GM12878 (cell line): ENCODE measurements at regions of chr16 and their contacts with region 1.

Region 1: DNA sequence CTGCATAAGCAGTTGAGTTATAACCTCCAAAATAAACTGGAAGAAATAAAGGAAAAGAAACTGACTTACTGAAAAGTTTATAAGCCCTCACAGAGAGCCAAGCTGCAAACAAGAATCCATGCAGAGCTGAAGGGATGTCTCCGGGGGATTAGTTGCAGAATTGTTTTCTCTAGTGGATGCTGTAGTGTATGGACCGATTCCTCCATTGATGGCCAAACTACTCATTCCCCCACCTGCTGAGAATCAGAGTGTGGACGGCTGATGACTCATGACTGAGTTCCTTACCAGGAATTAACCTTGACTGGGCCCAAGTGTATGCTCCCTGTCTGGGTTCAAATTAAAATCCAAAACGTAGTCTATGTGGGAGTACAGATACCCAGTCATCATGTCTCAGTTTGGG is 93.9 kb upstream of the CDH8 start:
- DNase-seq: no peak
- ATAC-seq: no peak
- H3K4me3 ChIP-seq: no peak overlapping the region
- H3K27ac ChIP-seq: no peak overlapping the region
- H3K4me1 ChIP-seq: no peaks in the 10 kb centered on the region
- H3K27me3 ChIP-seq: no peaks in the 10 kb centered on the region
- CTCF ChIP-seq: no peak
- EP300 ChIP-seq: no peak
- POLR2A ChIP-seq: no peak
- RAD21 ChIP-seq: no peak

Region 2: DNA sequence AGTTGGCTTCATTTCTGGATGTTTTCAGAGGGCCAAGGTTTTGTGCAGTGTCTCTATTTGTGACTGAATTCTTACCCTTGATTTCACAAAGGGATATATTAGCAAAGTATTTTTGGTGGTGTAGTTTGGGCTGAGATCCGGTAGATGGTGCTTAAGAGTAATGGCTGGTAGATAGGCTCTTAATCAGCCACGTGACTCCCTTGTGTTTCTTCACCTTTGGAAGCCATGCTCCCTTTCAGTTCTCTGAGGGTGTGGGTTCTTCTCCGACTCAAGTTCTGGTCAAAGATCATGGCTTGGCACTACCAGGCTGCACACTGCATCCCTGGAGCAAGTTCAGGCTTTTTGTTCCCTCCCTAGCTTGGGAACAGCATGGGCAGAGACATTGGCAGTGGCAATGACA is 981.2 kb before region 1 on chr16:
- CTCF ChIA-PET with region 1: no interaction called
- POLR2A ChIA-PET with region 1: no interaction called
- RAD21 ChIA-PET with region 1: no interaction called
- SMC1A ChIA-PET with region 1: no interaction called
- in situ Hi-C with region 1: no loop called
- intact Hi-C with region 1: loop called (anchors 10 kb)
- DNase-seq: no peak
- ATAC-seq: peak; percentile 44; the same call in 2 of the 3 replicates
- H3K4me3 ChIP-seq: no peak overlapping the region
- H3K27ac ChIP-seq: no peak overlapping the region
- H3K4me1 ChIP-seq: no peaks in the 10 kb centered on the region
- H3K27me3 ChIP-seq: no peaks in the 10 kb centered on the region
- CTCF ChIP-seq: 0 out of 6 replicates have a peak, but pooled peaks of 1 of the 3 experiments have one; percentile 11
- EP300 ChIP-seq: no peak
- POLR2A ChIP-seq: no peak
- RAD21 ChIP-seq: peak; percentile 40; the same call in 1 of the 2 replicates

Region 3: DNA sequence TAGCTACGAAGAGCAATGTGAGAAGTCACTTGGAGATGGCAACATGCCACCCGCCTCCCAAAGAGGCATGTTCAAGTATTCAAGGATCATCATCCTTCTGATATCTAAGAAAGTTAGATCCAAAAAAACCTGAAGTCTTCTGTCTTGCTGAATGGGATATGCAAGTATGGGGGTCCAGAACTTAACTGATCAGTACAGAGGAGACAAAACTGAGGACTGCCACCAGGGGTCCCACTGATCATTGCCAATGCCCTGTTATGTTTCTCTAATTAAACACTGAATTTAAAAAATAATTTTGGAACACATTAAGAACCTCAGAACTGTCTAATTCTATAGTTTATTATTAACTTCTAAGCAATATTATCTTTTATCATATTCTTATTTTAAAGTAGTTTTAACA is 193.6 kb before region 1 on chr16:
- CTCF ChIA-PET with region 1: no interaction called
- POLR2A ChIA-PET with region 1: no interaction called
- RAD21 ChIA-PET with region 1: no interaction called
- SMC1A ChIA-PET with region 1: no interaction called
- in situ Hi-C with region 1: no loop called
- intact Hi-C with region 1: loop called (anchors 5 kb)
- DNase-seq: no peak
- ATAC-seq: peak; percentile 67
- H3K4me3 ChIP-seq: no peak overlapping the region
- H3K27ac ChIP-seq: no peak overlapping the region
- H3K4me1 ChIP-seq: no peaks in the 10 kb centered on the region
- H3K27me3 ChIP-seq: no peaks in the 10 kb centered on the region
- CTCF ChIP-seq: peak in 1 of 3 experiments; percentile 26; a peak in 1 of 6 replicates
- EP300 ChIP-seq: no peak
- POLR2A ChIP-seq: no peak
- RAD21 ChIP-seq: peak; percentile 39; the same call in 1 of the 2 replicates